Activated CD8-positive, alpha-beta T cell treated with anti-CD3 and anti-CD28 coated beads, Interleukin-2, amount 10 ng/mL, durations not matched to agents 7 days and 5 days (primary cell): ENCODE measurements at regions of chr19 and their contacts with region 1.

Region 1: DNA sequence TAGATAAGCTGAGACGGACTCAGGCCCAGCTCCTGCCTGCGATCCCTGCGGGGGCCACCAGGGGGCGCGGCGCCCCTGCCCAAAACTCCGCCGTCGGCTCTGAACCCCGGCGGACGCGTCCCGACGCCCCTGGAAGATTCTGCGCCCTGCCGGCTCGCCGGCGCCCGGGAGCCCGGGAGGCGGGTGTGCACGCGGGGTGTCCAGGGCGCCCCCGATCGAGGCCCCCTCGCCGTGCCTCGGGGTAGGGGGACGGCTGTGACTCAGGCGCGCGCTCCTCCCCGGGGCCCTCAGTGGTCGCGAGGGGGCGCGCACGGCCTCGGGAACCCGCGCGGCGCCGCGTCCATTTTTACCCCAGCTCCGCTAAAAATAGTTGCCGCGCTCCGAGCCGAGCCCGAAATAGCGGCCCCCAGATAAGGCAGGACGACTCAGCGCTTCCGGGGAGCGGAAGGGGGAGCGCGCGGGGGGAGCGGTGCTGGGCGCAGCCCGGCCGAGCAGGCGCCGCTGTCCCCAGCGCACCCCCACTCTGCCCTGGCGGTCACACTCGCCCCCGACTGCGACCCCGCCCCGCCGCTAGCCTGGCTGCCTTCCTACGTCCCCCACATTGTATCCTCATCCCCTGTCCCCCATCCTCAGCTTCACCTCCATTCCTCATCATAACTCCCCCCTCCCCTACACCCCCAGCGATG is 16.0 kb upstream of the ERCC1 start:
- DNase-seq: peak; percentile 92
- ATAC-seq: peak; percentile 72
- H3K4me3 Mint-ChIP-seq: peak overlapping the region; percentile 62
- H3K27ac Mint-ChIP-seq: peak overlapping the region; percentile 83
- H3K4me1 Mint-ChIP-seq: peaks cover 37% of the 10 kb centered on the region
- H3K27me3 Mint-ChIP-seq: peaks cover 2% of the 10 kb centered on the region

Region 2: DNA sequence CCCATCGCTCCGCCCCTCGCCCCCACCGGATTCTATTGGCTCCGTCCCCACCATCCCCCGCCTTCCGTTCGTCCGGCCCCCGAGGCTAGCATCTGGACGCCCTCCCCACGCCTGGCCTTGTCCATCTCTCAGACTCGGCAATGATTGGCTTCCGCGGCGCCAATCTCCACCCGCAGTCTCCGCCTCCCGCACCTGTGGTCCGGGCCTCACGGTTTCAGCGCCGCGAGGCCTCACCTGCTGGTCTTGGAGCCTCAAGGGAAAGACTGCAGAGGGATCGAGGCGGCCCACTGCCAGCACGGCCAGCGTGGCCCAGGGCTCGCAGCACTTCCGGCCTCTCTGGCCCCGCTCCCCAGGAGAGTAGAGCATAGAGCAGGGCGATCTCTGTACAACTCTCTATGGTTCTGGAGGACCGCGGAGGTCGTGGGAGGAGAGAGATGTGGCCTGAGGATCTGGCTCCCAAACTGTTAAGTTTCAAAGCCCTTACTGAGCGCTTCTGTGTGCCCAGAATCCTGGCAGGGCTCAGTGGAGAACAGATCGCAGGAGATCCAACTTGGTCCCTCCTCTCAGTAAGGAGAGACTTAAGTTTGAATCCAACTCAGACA is 16.0 kb before region 1 on chr19 and contains the start of gene ERCC1:
- CTCF ChIA-PET with region 1: interaction called, 25 read pairs
- POLR2A ChIA-PET with region 1: interaction called, 4 read pairs
- DNase-seq: peak; percentile 95
- ATAC-seq: peak; percentile 73
- H3K4me3 Mint-ChIP-seq: peak within 1 kb of the TSS; percentile 84
- H3K27ac Mint-ChIP-seq: peak within 1 kb of the TSS; percentile 87
- H3K4me1 Mint-ChIP-seq: peaks cover 72% of the 10 kb centered on the region
- H3K27me3 Mint-ChIP-seq: peaks cover 4% of the 10 kb centered on the region
- total RNA-seq, gene ERCC1: 57.5 to 64.8 TPM

Region 3: DNA sequence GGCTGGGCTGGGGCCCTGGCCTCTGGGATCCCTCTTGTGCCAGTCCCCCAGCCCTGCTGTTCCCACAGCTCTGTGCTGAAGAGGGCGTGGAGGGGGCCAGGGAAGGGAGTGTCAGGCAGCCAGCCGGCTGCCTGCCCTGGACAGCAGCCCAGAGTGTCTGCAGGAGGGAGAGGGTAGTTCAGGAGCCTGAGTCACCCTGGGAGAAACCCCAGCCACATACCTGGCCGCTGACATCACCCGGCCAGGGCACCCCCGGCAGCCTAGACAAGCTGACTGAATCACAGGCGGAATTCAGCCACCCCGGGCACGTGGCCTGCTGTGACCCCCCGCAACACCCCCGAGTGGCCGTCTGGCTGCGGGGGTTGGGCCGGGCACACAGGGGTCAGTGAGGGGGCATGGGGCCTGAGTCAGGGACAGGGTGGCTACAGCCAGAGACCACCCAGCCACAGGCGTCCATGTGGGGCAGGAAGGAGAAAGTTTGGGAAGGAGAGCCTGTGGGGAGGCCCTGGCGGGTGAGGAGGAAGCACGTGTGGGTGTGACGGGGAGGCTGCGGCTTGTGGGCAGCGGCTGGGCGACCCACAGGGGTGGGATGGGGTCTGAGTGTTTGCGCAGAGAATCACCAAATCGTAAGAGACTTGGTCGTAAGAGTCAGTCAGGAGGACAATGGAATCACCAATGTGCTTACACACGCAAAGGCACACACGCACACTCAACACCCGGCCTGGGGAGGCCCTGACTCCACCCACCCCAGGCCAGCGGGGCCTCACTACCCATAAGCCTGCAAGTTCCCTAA is 16.2 kb after region 1 on chr19:
- CTCF ChIA-PET with region 1: interaction called, 11 read pairs
- POLR2A ChIA-PET with region 1: interaction called, 4 read pairs
- DNase-seq: peak; percentile 58
- ATAC-seq: peak; percentile 48
- H3K4me3 Mint-ChIP-seq: peak overlapping the region; percentile 12
- H3K27ac Mint-ChIP-seq: no peak overlapping the region
- H3K4me1 Mint-ChIP-seq: peaks cover 34% of the 10 kb centered on the region
- H3K27me3 Mint-ChIP-seq: peaks cover 12% of the 10 kb centered on the region

Region 4: GRCh38 chr19:45496349-45496953 is 56.7 kb after region 1 on chr19:
- CTCF ChIA-PET with region 1: interaction called, 17 read pairs
- POLR2A ChIA-PET with region 1: no interaction called
- DNase-seq: peak; percentile 66
- ATAC-seq: peak; percentile 10
- H3K4me3 Mint-ChIP-seq: peak overlapping the region; percentile 5
- H3K27ac Mint-ChIP-seq: no peak overlapping the region
- H3K4me1 Mint-ChIP-seq: peaks cover 37% of the 10 kb centered on the region
- H3K27me3 Mint-ChIP-seq: peaks cover 15% of the 10 kb centered on the region

Region 5: DNA sequence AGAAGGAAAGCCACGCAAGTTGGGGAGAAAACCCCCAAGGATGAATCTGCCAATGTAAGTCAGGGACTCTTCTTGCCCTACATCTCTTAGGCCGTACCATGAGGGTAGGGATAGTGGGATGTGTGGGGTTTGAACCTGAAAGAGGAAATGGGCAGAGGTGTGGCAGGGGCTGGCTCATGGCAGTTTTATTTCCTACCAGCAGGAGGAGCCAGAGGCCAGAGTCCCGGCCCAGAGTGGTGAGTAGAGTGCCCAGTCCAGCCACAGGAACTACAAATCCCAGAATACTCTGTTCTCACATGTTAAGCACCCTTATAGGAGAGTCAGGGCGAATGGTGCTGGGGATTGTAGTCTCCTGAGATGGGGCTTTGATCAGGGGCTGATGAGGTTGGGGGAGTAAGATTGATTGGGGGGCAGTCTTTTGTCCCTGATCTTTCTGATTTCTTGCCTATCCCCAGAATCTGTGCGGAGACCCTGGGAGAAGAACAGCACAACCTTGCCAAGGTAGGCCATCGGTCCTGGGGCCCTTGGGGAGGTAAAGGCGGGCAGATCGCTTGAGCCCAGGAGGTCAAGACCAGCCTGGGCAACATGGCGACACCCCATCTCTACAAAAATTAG is 84.0 kb after region 1 on chr19:
- CTCF ChIA-PET with region 1: no interaction called
- POLR2A ChIA-PET with region 1: no interaction called
- DNase-seq: peak; percentile 83
- ATAC-seq: peak; percentile 98
- H3K4me3 Mint-ChIP-seq: no peak overlapping the region
- H3K27ac Mint-ChIP-seq: peak overlapping the region; percentile 7
- H3K4me1 Mint-ChIP-seq: peaks cover 34% of the 10 kb centered on the region
- H3K27me3 Mint-ChIP-seq: peaks cover 2% of the 10 kb centered on the region